ENCODE measurements at regions of chr7 and their contacts with region 1.

Region 1: GRCh38 chr7:96388620-96389383 is 66.9 kb upstream of the SLC25A13 start:
- DNase-seq: peak; percentile 89
- H3K4me3 ChIP-seq: peak overlapping the region in 1 of 3 experiments; percentile 38
- H3K27ac ChIP-seq: peak overlapping the region; percentile 97
- H3K4me1 ChIP-seq: peaks cover 26% of the 10 kb centered on the region
- H3K27me3 ChIP-seq: no peaks in the 10 kb centered on the region
- CTCF ChIP-seq: no peak
- POLR2A ChIP-seq: peak; percentile 18

Region 2: DNA sequence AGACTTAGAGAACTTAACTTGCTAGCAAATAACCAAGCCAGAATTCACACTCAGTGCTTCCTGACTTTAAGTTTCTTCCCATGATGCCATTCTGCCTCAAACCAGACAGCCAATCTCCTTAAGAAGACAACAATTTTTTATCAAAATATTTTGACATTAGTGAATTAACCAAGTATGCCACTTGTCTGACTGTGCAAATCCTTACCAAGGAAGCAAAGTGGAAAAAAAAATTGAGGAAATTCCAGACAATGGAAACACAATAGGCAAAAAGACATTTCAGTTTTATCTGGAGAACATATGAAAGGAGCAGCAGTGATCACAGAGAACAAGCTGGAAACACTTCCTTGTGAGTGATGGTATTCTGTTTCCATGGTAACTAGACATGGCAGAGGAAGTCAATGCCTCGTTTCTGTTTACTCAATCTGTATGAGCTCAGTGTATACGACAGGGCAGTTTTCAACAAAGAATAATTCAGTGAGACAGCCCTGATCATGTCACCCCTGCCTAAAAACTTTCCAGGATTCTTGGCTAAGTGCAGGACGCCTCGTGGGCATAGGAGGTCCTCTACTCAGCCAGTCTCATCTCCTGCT is 502.2 kb before region 1 on chr7:
- CTCF ChIA-PET with region 1: no interaction called
- POLR2A ChIA-PET with region 1: no interaction called
- dilution Hi-C with region 1: no loop called
- intact Hi-C with region 1: loop called (anchors 2 kb)
- DNase-seq: peak; percentile 96
- H3K4me3 ChIP-seq: peak overlapping the region in 1 of 3 experiments; percentile 7
- H3K27ac ChIP-seq: peak overlapping the region; percentile 73
- H3K4me1 ChIP-seq: peaks cover 17% of the 10 kb centered on the region
- H3K27me3 ChIP-seq: no peaks in the 10 kb centered on the region
- CTCF ChIP-seq: no peak
- POLR2A ChIP-seq: no peak

Region 3: DNA sequence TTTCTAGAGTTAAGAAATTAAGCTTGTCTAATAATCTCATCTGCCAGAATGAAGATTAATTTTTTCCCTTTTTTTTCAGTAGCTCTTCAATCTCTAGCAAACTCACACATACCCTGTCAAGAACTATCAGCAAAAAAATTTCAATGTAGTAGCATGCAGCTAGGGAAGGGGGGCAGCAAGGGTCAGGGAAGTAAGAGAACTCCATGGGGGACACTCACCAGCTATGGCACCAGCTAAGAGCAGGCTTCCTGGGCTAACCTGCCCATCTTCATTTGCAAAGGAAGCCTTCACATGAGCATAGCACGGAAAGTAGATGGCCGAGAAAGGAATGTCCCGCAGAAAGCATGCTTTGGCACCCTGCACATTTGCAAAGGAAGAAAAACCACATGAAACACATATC is 257.3 kb before region 1 on chr7:
- CTCF ChIA-PET with region 1: no interaction called
- POLR2A ChIA-PET with region 1: no interaction called
- dilution Hi-C with region 1: no loop called
- intact Hi-C with region 1: no loop called
- DNase-seq: no peak
- H3K4me3 ChIP-seq: no peak overlapping the region
- H3K27ac ChIP-seq: no peak overlapping the region
- H3K4me1 ChIP-seq: no peaks in the 10 kb centered on the region
- H3K27me3 ChIP-seq: no peaks in the 10 kb centered on the region
- CTCF ChIP-seq: no peak
- POLR2A ChIP-seq: no peak

Region 4: DNA sequence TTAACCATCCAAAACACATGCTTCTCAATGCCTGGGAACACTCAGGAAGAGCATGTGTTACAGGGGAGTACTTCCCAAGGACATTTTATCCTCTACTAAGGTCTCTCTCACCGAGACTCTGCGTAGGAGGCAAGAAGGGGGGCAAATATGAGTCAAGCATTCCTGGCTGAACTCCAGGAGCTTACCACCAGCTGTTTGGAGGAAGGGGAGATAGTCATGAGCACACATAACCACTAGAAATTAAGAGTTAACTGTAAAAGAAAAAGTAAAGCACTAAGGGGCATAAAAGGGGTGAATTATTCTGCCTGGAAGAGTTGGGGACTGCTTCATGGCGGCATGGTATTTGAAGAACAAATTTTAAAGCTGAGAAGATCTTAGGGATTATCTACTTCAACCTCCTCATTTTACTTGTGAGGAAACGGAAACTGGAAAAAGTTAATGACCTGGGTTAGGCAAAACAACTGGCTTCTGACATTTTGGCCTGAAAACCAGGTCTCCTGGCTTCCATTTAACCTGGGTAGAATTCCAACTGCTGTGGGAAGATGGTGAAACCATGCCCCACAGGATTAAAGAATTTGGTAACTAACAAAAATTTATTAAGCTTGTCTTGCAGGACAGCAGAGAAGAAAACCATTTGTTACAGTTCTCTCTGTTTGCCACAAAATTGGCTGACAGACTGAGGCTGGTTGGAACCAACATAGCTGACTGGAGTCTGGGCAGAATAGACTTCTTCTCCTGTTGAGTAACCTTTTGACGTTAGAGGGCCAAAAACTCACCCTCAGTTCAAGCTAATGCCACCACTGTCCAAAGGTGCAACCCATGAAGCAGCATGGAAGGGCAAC is 152.4 kb before region 1 on chr7:
- CTCF ChIA-PET with region 1: no interaction called
- POLR2A ChIA-PET with region 1: no interaction called
- dilution Hi-C with region 1: no loop called
- intact Hi-C with region 1: loop called (anchors 1 kb)
- DNase-seq: peak; percentile 97
- H3K4me3 ChIP-seq: no peak overlapping the region
- H3K27ac ChIP-seq: peak overlapping the region; percentile 2
- H3K4me1 ChIP-seq: peaks cover 18% of the 10 kb centered on the region
- H3K27me3 ChIP-seq: no peaks in the 10 kb centered on the region
- CTCF ChIP-seq: no peak
- POLR2A ChIP-seq: no peak

Region 5: GRCh38 chr7:96414931-96415292 is 26.1 kb after region 1 on chr7:
- CTCF ChIA-PET with region 1: interaction called, 3 read pairs
- POLR2A ChIA-PET with region 1: no interaction called
- dilution Hi-C with region 1: no loop called
- intact Hi-C with region 1: loop called (anchors 1 kb)
- DNase-seq: peak; percentile 10
- H3K4me3 ChIP-seq: no peak overlapping the region
- H3K27ac ChIP-seq: no peak overlapping the region
- H3K4me1 ChIP-seq: peaks cover 6% of the 10 kb centered on the region
- H3K27me3 ChIP-seq: no peaks in the 10 kb centered on the region
- CTCF ChIP-seq: peak; percentile 40 to 41
- POLR2A ChIP-seq: no peak

Region 6: DNA sequence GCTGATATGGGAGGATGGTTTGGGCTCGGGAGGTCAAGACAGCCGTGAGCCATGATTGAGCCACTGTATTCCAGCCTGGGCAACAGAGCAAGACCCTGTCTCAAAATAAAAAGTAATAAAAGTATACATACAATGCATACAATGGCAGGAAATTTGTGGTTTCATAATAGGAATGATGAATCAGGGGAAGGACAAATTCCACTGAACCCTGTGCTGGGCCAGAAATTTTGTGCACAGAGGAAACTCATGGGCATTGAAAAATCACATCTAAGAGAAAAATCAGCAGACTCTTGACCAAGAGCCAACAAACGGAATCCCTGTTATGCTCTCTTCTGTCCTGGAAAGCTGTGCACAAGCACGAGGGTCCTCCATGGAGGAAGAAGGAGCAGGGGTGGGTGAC is 285.8 kb after region 1 on chr7:
- CTCF ChIA-PET with region 1: no interaction called
- POLR2A ChIA-PET with region 1: no interaction called
- dilution Hi-C with region 1: no loop called
- intact Hi-C with region 1: loop called (anchors 1 kb)
- DNase-seq: peak; percentile 76
- H3K4me3 ChIP-seq: no peak overlapping the region
- H3K27ac ChIP-seq: peak overlapping the region; percentile 36
- H3K4me1 ChIP-seq: peaks cover 28% of the 10 kb centered on the region
- H3K27me3 ChIP-seq: no peaks in the 10 kb centered on the region
- CTCF ChIP-seq: no peak
- POLR2A ChIP-seq: no peak

Region 7: GRCh38 chr7:96709381-96710228 is 320.8 kb after region 1 on chr7 and contains the start of gene SEM1:
- CTCF ChIA-PET with region 1: no interaction called
- POLR2A ChIA-PET with region 1: no interaction called
- dilution Hi-C with region 1: no loop called
- intact Hi-C with region 1: loop called (anchors 2 kb)
- DNase-seq: peak; percentile 91
- H3K4me3 ChIP-seq: peak within 1 kb of the TSS; percentile 70 to 98 (median 73)
- H3K27ac ChIP-seq: peak within 1 kb of the TSS; percentile 96
- H3K4me1 ChIP-seq: peaks cover 15% of the 10 kb centered on the region
- H3K27me3 ChIP-seq: peaks cover 0 to 4% of the 10 kb centered on the region in 2 experiments
- CTCF ChIP-seq: no peak
- POLR2A ChIP-seq: peak; percentile 80
- total RNA-seq, gene SEM1: 81.6 and 94.7 TPM in 2 replicates